ENCODE measurements at regions of chr14 and their contacts with region 1.

Region 1: GRCh38 chr14:61761959-61762786 is at the start of gene SNAPC1:
- DNase-seq: peak; percentile 99
- H3K4me3 Mint-ChIP-seq: peak within 1 kb of the TSS; percentile 98
- H3K27ac Mint-ChIP-seq: peak within 1 kb of the TSS; percentile 98
- H3K4me1 Mint-ChIP-seq: peaks cover 51% of the 10 kb centered on the region
- H3K27me3 Mint-ChIP-seq: peaks cover 1% of the 10 kb centered on the region
- total RNA-seq, gene SNAPC1: 5.2 to 5.5 TPM

Region 2: GRCh38 chr14:61678975-61679374 is 83.2 kb before region 1 on chr14:
- CTCF ChIA-PET with region 1: no interaction called
- POLR2A ChIA-PET with region 1: no interaction called
- DNase-seq: no peak
- H3K4me3 Mint-ChIP-seq: no peak overlapping the region
- H3K27ac Mint-ChIP-seq: no peak overlapping the region
- H3K4me1 Mint-ChIP-seq: peaks cover 7% of the 10 kb centered on the region
- H3K27me3 Mint-ChIP-seq: peaks cover 4% of the 10 kb centered on the region

Region 3: GRCh38 chr14:61750708-61751474 is 11.3 kb before region 1 on chr14:
- CTCF ChIA-PET with region 1: interaction called, 24 read pairs
- POLR2A ChIA-PET with region 1: interaction called, 6 read pairs
- DNase-seq: peak; percentile 87
- H3K4me3 Mint-ChIP-seq: peak overlapping the region; percentile 94
- H3K27ac Mint-ChIP-seq: peak overlapping the region; percentile 89
- H3K4me1 Mint-ChIP-seq: peaks cover 47% of the 10 kb centered on the region
- H3K27me3 Mint-ChIP-seq: peaks cover 4% of the 10 kb centered on the region

Region 4: DNA sequence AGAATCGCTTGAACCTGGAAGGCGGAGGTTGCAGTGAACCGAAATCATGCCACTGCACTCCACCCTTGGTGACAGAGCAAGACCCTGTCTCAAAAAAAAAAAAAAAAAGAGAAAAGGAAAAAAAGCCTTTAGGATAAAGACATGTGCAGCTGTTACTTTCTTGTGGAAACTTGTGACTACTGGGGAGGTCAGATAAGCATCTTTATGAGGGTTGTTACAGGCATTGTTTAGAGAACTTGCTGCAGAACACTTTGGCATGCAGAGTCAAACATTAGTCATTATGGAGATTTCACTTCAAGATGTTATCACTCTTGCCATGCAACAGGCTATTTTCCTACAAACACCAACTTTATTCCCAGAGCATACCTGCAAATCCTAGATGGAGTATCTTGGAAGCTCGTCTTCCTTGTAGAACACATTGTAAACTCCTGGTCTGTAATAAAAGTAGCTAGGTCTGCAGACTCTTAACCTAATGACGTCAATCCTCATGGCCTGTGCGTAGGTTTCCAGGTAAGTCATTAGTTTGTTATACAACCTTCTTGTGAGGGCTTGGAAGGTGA is 1915.7 kb after region 1 on chr14:
- CTCF ChIA-PET with region 1: no interaction called
- POLR2A ChIA-PET with region 1: no interaction called
- DNase-seq: no peak
- H3K4me3 Mint-ChIP-seq: no peak overlapping the region
- H3K27ac Mint-ChIP-seq: no peak overlapping the region
- H3K4me1 Mint-ChIP-seq: no peaks in the 10 kb centered on the region
- H3K27me3 Mint-ChIP-seq: no peaks in the 10 kb centered on the region

Measured in activated CD4-positive, alpha-beta T cell treated with anti-CD3 and anti-CD28 coated beads, Interleukin-2, amount 10 ng/mL, durations not matched to agents 7 days and 5 days (primary cell).